ENCODE measurements at regions of chr12 and their contacts with region 1.

Region 1: GRCh38 chr12:31959161-31959700 is at the start of gene RESF1:
- DNase-seq: peak; percentile 92
- H3K4me3 Mint-ChIP-seq: peak within 1 kb of the TSS; percentile 91
- H3K27ac Mint-ChIP-seq: peak within 1 kb of the TSS; percentile 98
- H3K4me1 Mint-ChIP-seq: peaks cover 65% of the 10 kb centered on the region
- H3K27me3 Mint-ChIP-seq: no peaks in the 10 kb centered on the region
- total RNA-seq, gene RESF1: 152 to 154 TPM

Region 2: DNA sequence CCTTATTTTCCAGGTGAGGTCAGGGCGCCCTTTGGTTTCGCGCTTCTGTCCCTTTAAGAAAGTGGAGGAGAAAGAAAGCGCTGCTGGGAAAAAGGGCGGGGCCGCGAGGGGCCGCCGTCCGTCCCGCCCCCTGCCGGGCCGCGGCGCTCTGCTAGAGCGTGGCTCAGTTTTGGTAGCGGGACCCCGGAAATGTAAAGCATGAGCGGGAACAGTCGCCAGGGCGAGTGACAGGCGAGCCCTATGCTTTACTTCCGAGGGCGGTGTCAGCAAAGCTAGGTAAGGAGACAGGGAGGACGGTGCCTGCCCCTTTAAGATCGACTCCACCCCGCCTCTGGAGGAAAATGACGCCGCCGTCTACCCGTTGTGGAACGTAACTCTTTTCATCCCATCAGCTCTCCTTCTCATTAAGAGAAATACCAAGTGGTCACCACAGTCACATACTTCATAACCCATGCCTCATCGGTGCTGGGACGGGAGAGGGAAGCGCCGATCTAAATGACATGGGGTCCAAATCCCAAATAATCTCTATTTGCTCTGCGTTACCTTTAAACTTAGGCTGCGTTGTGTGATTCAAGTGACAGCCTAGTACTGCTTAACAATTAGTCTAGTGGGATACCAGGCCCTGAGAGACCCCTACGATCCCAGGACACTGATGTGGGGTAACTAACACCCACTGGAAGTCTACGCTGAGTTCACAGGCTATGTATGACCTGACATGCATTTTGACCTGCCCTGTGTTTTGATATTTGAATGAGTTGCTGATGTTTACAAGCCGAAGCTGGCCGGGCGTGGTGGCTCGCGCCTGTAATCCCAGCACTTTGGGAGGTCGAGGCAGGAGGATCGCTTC is 299.9 kb before region 1 on chr12 and contains the start of gene ETFBKMT:
- CTCF ChIA-PET with region 1: interaction called, 8 read pairs
- POLR2A ChIA-PET with region 1: interaction called, 14 read pairs
- DNase-seq: peak; percentile 96
- H3K4me3 Mint-ChIP-seq: peak within 1 kb of the TSS; percentile 96
- H3K27ac Mint-ChIP-seq: peak within 1 kb of the TSS; percentile 100
- H3K4me1 Mint-ChIP-seq: peaks cover 22% of the 10 kb centered on the region
- H3K27me3 Mint-ChIP-seq: no peaks in the 10 kb centered on the region
- total RNA-seq, gene ETFBKMT: 1.3 to 1.4 TPM

Region 3: DNA sequence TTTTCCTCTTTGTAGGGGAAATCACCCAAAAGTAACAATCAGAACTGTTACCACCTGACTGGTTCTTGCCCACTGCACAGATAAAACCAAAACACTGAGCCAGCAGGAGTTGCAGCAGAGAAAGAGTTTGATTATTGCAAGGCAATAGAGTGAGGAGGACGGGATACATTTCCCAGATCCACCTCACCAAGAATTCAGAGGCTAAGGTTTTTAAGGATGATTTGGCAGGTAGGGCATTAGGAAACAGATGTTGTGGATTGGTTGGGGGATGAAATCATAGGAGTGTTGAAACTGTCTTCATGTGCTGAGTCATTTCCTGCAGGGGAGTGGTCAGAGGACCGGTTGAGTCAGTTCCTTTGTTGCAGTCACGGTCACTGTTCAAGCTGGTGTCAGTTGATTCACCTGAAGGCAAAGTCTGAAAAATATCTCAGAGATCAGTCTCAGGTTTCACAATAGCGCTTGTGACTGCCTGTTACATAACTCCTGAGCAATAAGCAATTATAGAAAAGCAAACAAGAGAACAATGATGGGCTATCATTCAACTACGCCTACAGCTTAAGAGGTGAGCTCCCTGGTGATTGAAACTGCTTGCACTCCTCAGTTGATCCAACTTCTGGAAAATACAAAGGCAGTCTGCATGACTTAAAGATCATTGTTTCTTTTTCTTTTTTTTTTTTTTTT is 210.1 kb before region 1 on chr12:
- CTCF ChIA-PET with region 1: no interaction called
- POLR2A ChIA-PET with region 1: interaction called, 11 read pairs
- DNase-seq: peak; percentile 83
- H3K4me3 Mint-ChIP-seq: peak overlapping the region; percentile 0
- H3K27ac Mint-ChIP-seq: peak overlapping the region; percentile 67
- H3K4me1 Mint-ChIP-seq: peaks cover 52% of the 10 kb centered on the region
- H3K27me3 Mint-ChIP-seq: peaks cover 3% of the 10 kb centered on the region

Region 4: GRCh38 chr12:31896514-31897039 is 62.7 kb before region 1 on chr12:
- CTCF ChIA-PET with region 1: interaction called, 7 read pairs
- POLR2A ChIA-PET with region 1: interaction called, 74 read pairs
- DNase-seq: peak; percentile 91
- H3K4me3 Mint-ChIP-seq: peak overlapping the region; percentile 48
- H3K27ac Mint-ChIP-seq: peak overlapping the region; percentile 97
- H3K4me1 Mint-ChIP-seq: peaks cover 53% of the 10 kb centered on the region
- H3K27me3 Mint-ChIP-seq: no peaks in the 10 kb centered on the region

Region 5: GRCh38 chr12:31985832-31986231 is 26.6 kb after region 1 on chr12:
- CTCF ChIA-PET with region 1: no interaction called
- POLR2A ChIA-PET with region 1: interaction called, 29 read pairs
- DNase-seq: no peak
- H3K4me3 Mint-ChIP-seq: no peak overlapping the region
- H3K27ac Mint-ChIP-seq: no peak overlapping the region
- H3K4me1 Mint-ChIP-seq: peaks cover 74% of the 10 kb centered on the region
- H3K27me3 Mint-ChIP-seq: no peaks in the 10 kb centered on the region

Region 6: GRCh38 chr12:32390572-32391219 is 431.5 kb after region 1 on chr12:
- CTCF ChIA-PET with region 1: no interaction called
- POLR2A ChIA-PET with region 1: no interaction called
- DNase-seq: peak; percentile 31
- H3K4me3 Mint-ChIP-seq: peak overlapping the region; percentile 60
- H3K27ac Mint-ChIP-seq: no peak overlapping the region
- H3K4me1 Mint-ChIP-seq: peaks cover 5% of the 10 kb centered on the region
- H3K27me3 Mint-ChIP-seq: peaks cover 2% of the 10 kb centered on the region

Measured in activated CD4-positive, alpha-beta memory T cell treated with anti-CD3 and anti-CD28 coated beads, Interleukin-2, amount 10 ng/mL, durations not matched to agents 7 days and 5 days (primary cell).